ENCODE measurements at regions of chr1 and their contacts with region 1.

Region 1: GRCh38 chr1:40161125-40161887 is at the start of gene RLF:
- DNase-seq: peak; percentile 94
- H3K4me3 Mint-ChIP-seq: no peak within 1 kb of the TSS
- H3K27ac Mint-ChIP-seq: no peak within 1 kb of the TSS
- H3K4me1 Mint-ChIP-seq: peaks cover 6% of the 10 kb centered on the region
- H3K27me3 Mint-ChIP-seq: no peaks in the 10 kb centered on the region
- total RNA-seq, gene RLF: 18.2 and 19.9 TPM in 2 replicates

Region 2: DNA sequence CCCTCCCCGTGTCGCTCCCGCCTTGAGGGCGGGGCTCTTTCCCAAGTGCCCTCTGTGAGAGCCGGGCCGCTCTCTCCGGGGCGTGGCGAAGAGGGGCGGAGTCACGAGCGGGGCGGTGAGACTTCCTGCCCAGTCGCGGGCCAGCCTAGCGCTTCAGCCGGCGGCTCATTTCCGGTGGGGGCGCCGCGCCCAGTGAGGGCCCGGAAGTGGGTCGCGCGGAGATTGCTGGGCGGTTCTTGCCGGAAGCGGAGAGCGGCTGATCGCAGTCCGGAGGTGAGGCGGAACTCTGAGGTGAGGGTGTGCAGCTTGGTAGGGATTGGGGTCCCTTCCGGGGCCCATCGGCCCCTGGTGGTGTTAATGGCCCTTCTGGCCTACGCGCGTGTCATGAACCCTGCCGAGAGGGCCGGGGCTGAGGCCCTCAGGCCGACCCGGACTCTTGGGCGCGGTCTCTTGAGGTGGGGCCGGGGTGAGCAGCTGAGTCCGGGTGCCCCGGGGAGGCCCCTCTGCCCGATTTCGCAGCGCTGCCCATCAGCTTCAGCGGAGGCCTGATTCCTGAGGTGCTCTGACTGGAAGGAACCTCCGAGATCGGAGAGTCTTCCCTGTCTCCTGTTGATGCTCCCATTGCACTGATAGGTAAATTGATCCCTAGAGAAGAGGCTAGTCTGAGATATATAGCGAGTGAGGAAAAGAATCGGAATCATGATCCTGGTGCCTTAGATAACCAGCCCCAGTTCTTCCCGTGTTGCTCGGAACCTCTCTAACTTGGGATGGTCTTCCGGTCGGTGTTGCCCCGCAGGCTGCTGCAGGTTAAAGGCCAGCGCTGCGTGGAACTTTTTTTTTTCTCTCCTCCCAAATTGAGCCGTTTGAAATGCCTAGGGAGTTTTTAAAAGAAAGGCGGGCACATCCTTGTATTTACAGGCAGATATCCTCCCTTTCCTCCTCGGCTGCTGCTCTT is 120.5 kb before region 1 on chr1 and contains the start of gene CAP1:
- intact Hi-C with region 1: loop called (anchors 2 kb)
- DNase-seq: peak; percentile 100
- H3K4me3 Mint-ChIP-seq: peak within 1 kb of the TSS; percentile 97
- H3K27ac Mint-ChIP-seq: peak within 1 kb of the TSS; percentile 99
- H3K4me1 Mint-ChIP-seq: peaks cover 70% of the 10 kb centered on the region
- H3K27me3 Mint-ChIP-seq: no peaks in the 10 kb centered on the region
- total RNA-seq, gene CAP1: 421 and 435 TPM in 2 replicates

Region 3: GRCh38 chr1:40224040-40224439 is 62.7 kb after region 1 on chr1:
- intact Hi-C with region 1: loop called (anchors 1 kb)
- DNase-seq: no peak
- H3K4me3 Mint-ChIP-seq: no peak overlapping the region
- H3K27ac Mint-ChIP-seq: peak overlapping the region; percentile 43
- H3K4me1 Mint-ChIP-seq: peaks cover 26% of the 10 kb centered on the region
- H3K27me3 Mint-ChIP-seq: no peaks in the 10 kb centered on the region

Region 4: DNA sequence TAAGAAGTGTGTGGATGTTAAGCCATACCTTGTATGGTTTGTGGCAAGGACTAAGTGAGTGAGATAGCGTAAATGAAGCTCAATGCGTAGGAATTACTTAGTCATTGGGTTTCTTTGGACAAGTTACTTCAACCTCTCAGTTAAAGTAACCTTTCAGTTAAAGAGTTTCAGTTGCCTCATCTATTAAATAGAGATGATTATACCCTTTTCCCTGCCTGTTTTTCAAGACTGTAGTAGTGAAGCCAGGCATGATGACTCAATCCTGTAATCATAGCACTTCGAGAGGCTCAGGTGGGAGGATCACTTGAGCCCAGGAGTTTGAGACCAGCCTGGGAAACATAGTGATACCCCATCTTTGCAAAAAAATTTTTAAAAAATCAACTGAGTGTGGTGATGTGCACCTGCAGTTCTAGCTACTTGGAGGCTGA is 103.1 kb after region 1 on chr1:
- intact Hi-C with region 1: loop called (anchors 1 kb)
- DNase-seq: no peak
- H3K4me3 Mint-ChIP-seq: peak overlapping the region; percentile 58
- H3K27ac Mint-ChIP-seq: peak overlapping the region; percentile 88
- H3K4me1 Mint-ChIP-seq: peaks cover 53% of the 10 kb centered on the region
- H3K27me3 Mint-ChIP-seq: no peaks in the 10 kb centered on the region

Region 5: DNA sequence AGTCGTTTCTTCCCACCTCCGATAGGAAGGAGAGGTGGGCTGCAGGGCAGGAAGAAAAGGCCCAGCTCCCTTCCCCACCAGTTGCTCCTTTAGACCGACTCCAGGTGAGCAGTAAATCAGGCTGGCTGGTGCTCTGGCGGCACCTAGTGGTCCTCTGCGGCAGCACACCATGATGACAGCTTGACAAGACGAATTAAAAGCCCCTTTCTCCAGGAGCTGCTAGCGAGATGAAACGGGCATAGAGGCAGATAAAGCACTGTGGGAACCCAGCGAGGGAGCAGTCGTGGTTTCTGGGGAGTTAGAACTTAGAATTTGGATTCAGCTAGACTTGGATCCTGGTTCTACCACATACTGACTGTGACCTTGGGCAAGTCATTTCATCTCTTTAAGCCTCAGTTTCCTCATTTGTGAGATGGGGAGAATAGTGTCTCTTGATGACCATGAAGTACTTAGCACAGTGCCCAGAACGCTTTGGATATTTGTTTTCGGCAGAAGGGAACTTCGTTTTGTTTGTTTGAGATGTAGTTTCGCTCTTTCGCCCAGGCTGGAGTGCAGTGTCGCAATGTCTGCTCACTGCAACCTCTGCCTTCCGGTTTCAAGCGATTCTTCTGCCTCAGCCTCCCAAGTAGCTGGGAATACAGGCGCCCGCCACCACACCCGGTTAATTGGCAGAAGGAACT is 177.6 kb after region 1 on chr1:
- intact Hi-C with region 1: loop called (anchors 1 kb)
- DNase-seq: peak; percentile 84
- H3K4me3 Mint-ChIP-seq: peak overlapping the region; percentile 38
- H3K27ac Mint-ChIP-seq: peak overlapping the region; percentile 75
- H3K4me1 Mint-ChIP-seq: peaks cover 53% of the 10 kb centered on the region
- H3K27me3 Mint-ChIP-seq: no peaks in the 10 kb centered on the region

Region 6: DNA sequence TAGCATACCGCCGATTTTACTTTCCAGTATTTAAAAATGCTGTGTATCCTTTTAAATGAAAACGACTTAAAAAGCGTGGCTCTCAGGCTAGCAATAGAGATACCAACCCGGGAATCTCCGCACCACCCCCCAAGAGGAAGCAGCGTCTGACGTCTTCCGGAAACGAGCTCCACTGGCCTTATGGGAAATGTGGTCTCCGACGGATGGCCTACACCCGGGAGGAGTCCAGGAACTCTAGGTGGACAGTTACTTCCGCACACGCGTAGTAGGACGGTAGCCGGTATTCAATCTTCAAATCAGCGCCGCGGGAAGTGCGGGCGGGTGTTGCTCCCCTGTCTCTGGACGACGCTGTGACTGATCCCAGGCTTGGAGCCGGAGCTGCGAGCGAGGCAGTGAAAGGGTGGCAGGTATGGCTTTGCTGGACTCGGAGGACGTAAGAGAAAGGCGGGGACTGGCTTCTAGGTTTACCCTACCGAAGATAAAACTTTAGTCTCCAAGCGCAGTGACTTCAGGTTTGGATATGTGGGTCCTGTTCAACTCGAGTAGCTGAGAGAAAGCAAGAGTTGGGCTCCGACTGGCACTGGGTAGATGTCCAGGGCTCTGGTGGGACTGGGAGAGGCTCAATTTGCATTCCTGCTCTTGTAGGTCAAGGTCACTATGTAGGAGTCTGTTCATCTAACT is 370.2 kb after region 1 on chr1 and contains the start of gene ZNF684:
- intact Hi-C with region 1: no loop called
- DNase-seq: peak; percentile 83
- H3K4me3 Mint-ChIP-seq: peak within 1 kb of the TSS; percentile 97
- H3K27ac Mint-ChIP-seq: peak within 1 kb of the TSS; percentile 88
- H3K4me1 Mint-ChIP-seq: peaks cover 26% of the 10 kb centered on the region
- H3K27me3 Mint-ChIP-seq: peaks cover 2% of the 10 kb centered on the region
- total RNA-seq, gene ZNF684: 4.9 and 6.0 TPM in 2 replicates

Region 7: GRCh38 chr1:40979233-40980067 is 818.1 kb after region 1 on chr1 and contains the start of gene CTPS1:
- intact Hi-C with region 1: loop called (anchors 5 kb)
- DNase-seq: peak; percentile 90
- H3K4me3 Mint-ChIP-seq: peak within 1 kb of the TSS; percentile 90
- H3K27ac Mint-ChIP-seq: peak within 1 kb of the TSS; percentile 97
- H3K4me1 Mint-ChIP-seq: peaks cover 45% of the 10 kb centered on the region
- H3K27me3 Mint-ChIP-seq: no peaks in the 10 kb centered on the region
- total RNA-seq, gene CTPS1: 172 and 174 TPM in 2 replicates

Measured in activated T-helper 1 cell treated with anti-CD3 and anti-CD28 coated beads, Interleukin-12 subunit alpha, Interleukin-12 subunit beta, Interleukin-2, Interleukin-4 antibody, amounts not matched to agents 30 ng/mL and 10 ng/mL and 1 ng/mL, durations not matched to agents 14 hours and 24 hours and 36 hours (primary cell).